Psoas muscle (tissue), 8 donors: ENCODE measurements at regions of chr1 and their contacts with region 1.

Region 1: DNA sequence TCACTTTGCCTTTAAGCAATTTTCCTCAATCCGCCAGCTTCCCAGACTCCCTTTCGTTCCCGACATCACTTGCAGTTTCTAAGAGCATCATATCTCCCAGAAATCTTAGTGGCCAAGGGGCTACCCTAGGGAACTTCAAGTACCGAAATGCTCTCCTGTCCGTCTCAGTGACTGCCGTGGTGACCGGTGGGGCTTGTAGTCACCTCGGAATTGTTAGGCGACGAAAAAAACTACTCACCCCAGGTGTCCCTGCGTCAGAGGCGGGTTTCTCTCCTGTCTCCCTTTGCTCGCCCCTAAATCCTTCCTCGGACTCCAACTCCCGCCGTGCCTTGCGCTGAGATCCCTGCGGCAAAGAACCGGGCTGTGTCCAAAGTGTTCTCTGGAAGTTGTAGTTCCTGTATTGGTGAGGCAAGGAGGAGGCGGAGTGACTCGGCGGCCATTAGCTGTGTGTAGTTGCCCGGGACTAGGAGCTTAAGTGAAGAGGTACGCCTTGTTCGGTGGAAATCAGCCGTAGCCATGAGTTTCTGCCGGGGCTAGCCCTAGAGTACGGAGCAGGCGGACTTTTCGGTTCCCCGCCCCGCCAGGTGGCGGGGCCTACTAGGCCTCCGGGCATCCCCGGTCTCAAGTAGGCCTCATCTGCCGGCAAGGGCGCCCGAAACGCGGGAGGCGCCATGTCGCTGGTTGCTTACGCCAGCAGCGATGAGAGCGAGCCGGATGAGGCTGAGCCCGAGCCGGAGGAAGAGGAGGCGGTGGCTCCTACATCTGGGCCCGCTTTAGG is at the start of gene PRCC:
- DNase-seq: peak; percentile 97 to 99
- ATAC-seq: peak; percentile 94 to 95 (median 95)
- H3K4me3 ChIP-seq: peak within 1 kb of the TSS; percentile 95
- H3K27ac ChIP-seq: peak within 1 kb of the TSS; percentile 96
- H3K4me1 ChIP-seq: peaks cover 47% of the 10 kb centered on the region
- H3K27me3 ChIP-seq: no peaks in the 10 kb centered on the region
- CTCF ChIP-seq: no peak
- total RNA-seq, gene PRCC: 43.7 to 69.3 (median 64.0) TPM

Region 2: GRCh38 chr1:156728597-156729462 is 38.5 kb before region 1 on chr1 and contains the start of gene ISG20L2:
- intact Hi-C with region 1: loop called (anchors 2 to 5 kb)
- DNase-seq: peak; percentile 97 to 99
- ATAC-seq: peak; percentile 92 to 94 (median 94)
- H3K4me3 ChIP-seq: peak within 1 kb of the TSS; percentile 80
- H3K27ac ChIP-seq: peak within 1 kb of the TSS; percentile 99
- H3K4me1 ChIP-seq: peaks cover 45% of the 10 kb centered on the region
- H3K27me3 ChIP-seq: no peaks in the 10 kb centered on the region
- CTCF ChIP-seq: no peak
- total RNA-seq, gene ISG20L2: 7.4 to 19.8 (median 16.5) TPM

Region 3: DNA sequence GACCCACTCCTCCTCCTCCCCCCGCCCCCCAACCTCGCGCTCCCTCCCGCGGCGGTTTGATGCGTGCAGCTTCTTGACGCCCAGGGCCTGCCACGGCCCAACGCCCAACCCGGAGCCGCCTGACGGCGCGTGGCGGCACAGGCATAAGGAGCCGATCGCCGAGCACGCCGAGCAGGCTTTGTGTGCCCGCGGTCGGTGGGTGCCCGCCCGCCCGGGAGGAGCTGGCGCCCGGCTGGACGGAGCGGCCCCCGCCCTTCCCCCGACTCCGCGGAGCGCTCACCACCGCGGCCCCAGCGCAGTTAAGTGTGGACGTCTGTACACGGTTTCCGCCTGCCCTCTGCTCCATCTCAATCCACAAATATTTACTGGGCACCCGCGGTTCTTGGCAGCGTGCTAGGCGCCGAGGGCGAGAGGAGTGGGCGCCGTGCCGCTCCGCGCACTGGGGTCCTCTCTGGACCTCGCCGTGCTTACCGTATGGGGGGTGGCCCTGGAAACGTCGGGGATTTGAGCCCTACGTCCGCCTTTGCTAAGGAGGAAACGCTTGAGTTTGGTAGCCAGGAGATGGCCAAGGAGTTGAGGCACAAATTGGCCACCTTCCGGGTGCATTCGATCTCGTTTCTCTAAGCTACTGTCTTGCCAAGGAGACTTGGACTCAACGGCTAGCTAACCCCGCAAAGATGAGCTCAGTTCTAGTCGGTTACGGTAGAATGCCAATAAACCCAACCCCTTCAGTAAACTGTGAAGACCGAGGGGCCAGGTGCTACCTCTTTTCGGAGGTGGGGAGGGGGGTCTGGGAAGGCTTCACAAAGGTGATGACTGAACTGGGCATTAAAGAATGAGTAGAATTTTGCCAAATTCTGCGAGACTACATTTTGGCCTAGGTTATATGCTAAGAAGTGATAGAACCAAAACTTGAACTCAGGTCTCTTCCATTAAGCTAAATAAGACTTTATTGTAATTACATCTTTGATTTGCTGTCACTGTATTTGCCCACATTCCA is 15.2 kb before region 1 on chr1:
- intact Hi-C with region 1: loop called in 1 of 2 experiments (anchors 2 kb)
- DNase-seq: peak; percentile 99
- ATAC-seq: peak; percentile 71 to 77 (median 75)
- H3K4me3 ChIP-seq: peak overlapping the region; percentile 96
- H3K27ac ChIP-seq: peak overlapping the region; percentile 98
- H3K4me1 ChIP-seq: peaks cover 48% of the 10 kb centered on the region
- H3K27me3 ChIP-seq: no peaks in the 10 kb centered on the region
- CTCF ChIP-seq: no peak

Region 4: GRCh38 chr1:156860113-156860627 is 92.9 kb after region 1 on chr1:
- intact Hi-C with region 1: no loop called
- DNase-seq: peak; percentile 44 to 73
- ATAC-seq: peak; percentile 65 to 93 (median 84)
- H3K4me3 ChIP-seq: peak overlapping the region; percentile 59
- H3K27ac ChIP-seq: no peak overlapping the region
- H3K4me1 ChIP-seq: peaks cover 19% of the 10 kb centered on the region
- H3K27me3 ChIP-seq: peaks cover 0 to 71% (median 17%) of the 10 kb centered on the region in 3 donors
- CTCF ChIP-seq: peak; percentile 85